Heart left ventricle (tissue), 16 donors: ENCODE measurements at regions of chr3 and their contacts with region 1.

Region 1: GRCh38 chr3:133943639-133944141 is 48.0 kb upstream of the RAB6B start:
- DNase-seq: no peak
- ATAC-seq: peak in 2 of 4 donors; percentile 4 to 23
- H3K4me3 ChIP-seq: no peak overlapping the region
- H3K27ac ChIP-seq: peak overlapping the region in 6 of 12 donors; percentile 6 to 77 (median 50)
- H3K4me1 ChIP-seq: peaks cover 0 to 59% (median 27%) of the 10 kb centered on the region in 12 donors
- H3K27me3 ChIP-seq: no peaks in the 10 kb centered on the region
- CTCF ChIP-seq: no peak
- POLR2A ChIP-seq: no peak

Region 2: GRCh38 chr3:133457465-133458067 is 486.1 kb before region 1 on chr3:
- intact Hi-C with region 1: no loop called
- DNase-seq: no peak
- ATAC-seq: no peak
- H3K4me3 ChIP-seq: no peak overlapping the region
- H3K27ac ChIP-seq: no peak overlapping the region
- H3K4me1 ChIP-seq: peaks cover 0 to 15% (median 4%) of the 10 kb centered on the region in 12 donors
- H3K27me3 ChIP-seq: no peaks in the 10 kb centered on the region
- CTCF ChIP-seq: peak in 2 of 12 donors; percentile 9 to 13
- POLR2A ChIP-seq: no peak

Region 3: GRCh38 chr3:133986285-133986684 is 42.6 kb after region 1 on chr3:
- intact Hi-C with region 1: loop called in 3 of 10 experiments (anchors 2 kb)
- DNase-seq: no peak
- ATAC-seq: no peak
- H3K4me3 ChIP-seq: no peak overlapping the region
- H3K27ac ChIP-seq: peak overlapping the region in 6 of 12 donors; percentile 13 to 65 (median 42)
- H3K4me1 ChIP-seq: peaks cover 0 to 43% (median 9%) of the 10 kb centered on the region in 12 donors
- H3K27me3 ChIP-seq: no peaks in the 10 kb centered on the region
- CTCF ChIP-seq: no peak
- POLR2A ChIP-seq: no peak

Region 4: DNA sequence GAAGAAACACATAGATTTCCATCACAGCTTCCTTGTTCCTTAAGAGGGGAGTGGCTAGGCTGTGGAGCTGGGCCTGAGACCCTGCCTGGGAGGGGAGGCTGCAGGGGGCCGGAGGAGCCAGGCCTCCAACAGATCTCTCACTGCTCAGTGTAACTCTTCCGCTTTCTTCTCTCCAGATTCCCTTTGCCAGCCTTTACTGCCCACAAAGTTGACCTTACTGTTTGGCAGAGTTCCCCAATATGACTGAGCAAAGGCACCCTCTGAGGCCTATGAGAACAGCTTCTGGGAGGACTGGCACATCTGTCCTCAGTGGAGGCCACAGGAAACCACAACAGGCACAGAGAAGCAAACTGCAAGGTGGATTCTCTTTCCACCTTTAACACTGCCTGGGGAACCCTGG is 47.9 kb after region 1 on chr3:
- intact Hi-C with region 1: loop called in 3 of 10 experiments (anchors 2 kb)
- DNase-seq: no peak
- ATAC-seq: peak; percentile 11 to 44 (median 30)
- H3K4me3 ChIP-seq: no peak overlapping the region
- H3K27ac ChIP-seq: peak overlapping the region in 10 of 12 donors; percentile 8 to 60 (median 35)
- H3K4me1 ChIP-seq: peaks cover 0 to 55% (median 17%) of the 10 kb centered on the region in 12 donors
- H3K27me3 ChIP-seq: peaks cover 0 to 5% (median 0%) of the 10 kb centered on the region in 9 donors
- CTCF ChIP-seq: no peak
- POLR2A ChIP-seq: no peak

Region 5: DNA sequence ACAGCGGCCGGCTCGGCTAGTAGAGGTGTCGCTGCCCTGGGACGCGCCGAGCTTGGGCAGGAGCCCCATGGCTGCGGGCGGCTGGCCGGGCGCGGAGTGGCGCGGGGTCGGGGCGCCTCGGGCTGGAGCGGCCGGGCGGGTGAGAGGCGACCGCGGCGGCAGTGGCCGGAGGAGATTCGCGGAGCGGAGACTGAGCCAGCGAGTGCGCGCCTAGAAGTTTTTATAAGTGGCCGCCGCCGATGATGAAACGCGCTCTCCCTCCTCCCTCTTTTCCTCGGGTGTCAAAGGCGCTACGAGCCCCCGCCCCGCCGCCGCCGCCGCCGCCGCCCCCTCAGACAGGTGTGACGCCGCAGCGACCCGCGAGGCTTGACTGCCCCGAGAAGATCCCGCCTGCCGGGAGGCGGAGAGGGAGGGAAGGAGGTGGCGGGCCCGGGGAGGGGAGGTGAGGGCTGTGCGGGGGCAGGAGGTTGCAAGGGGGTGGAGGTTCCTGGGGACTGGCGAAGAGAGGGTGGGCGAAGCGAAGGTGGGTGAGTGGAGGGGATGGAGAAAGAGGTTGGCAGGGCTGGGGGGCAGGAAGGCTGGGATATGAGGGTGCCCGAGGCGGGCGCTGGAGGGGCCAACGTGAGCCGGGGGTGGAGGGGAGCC is 86.2 kb after region 1 on chr3 and contains the start of gene SLCO2A1:
- intact Hi-C with region 1: loop called in 4 of 10 experiments (anchors 5 to 10 kb)
- DNase-seq: peak in 3 of 5 donors; percentile 34 to 64 (median 51)
- ATAC-seq: peak in 3 of 4 donors; percentile 45 to 61 (median 56)
- H3K4me3 ChIP-seq: peak within 1 kb of the TSS; percentile 51 to 83 (median 59)
- H3K27ac ChIP-seq: peak within 1 kb of the TSS in 8 of 12 donors; percentile 1 to 73 (median 38)
- H3K4me1 ChIP-seq: peaks cover 0 to 20% (median 3%) of the 10 kb centered on the region in 12 donors
- H3K27me3 ChIP-seq: peaks cover 0 to 18% (median 9%) of the 10 kb centered on the region in 9 donors
- CTCF ChIP-seq: no peak
- POLR2A ChIP-seq: peak in 1 of 2 donors; percentile 11
- total RNA-seq, gene SLCO2A1: 2.8 to 28.4 (median 13.9) TPM

Region 6: GRCh38 chr3:134039161-134039862 is 95.6 kb after region 1 on chr3:
- intact Hi-C with region 1: loop called in 4 of 10 experiments (anchors 5 to 10 kb)
- DNase-seq: peak in 1 of 5 donors; percentile 64
- ATAC-seq: peak in 3 of 4 donors; percentile 61 to 77 (median 66)
- H3K4me3 ChIP-seq: no peak overlapping the region
- H3K27ac ChIP-seq: no peak overlapping the region
- H3K4me1 ChIP-seq: peaks cover 0 to 8% (median 0%) of the 10 kb centered on the region in 12 donors
- H3K27me3 ChIP-seq: no peaks in the 10 kb centered on the region
- CTCF ChIP-seq: peak in 11 of 12 donors; percentile 11 to 46 (median 31)
- POLR2A ChIP-seq: no peak